Psoas muscle (tissue), 8 donors: ENCODE measurements at regions of chr2 and their contacts with region 1.

Region 1: DNA sequence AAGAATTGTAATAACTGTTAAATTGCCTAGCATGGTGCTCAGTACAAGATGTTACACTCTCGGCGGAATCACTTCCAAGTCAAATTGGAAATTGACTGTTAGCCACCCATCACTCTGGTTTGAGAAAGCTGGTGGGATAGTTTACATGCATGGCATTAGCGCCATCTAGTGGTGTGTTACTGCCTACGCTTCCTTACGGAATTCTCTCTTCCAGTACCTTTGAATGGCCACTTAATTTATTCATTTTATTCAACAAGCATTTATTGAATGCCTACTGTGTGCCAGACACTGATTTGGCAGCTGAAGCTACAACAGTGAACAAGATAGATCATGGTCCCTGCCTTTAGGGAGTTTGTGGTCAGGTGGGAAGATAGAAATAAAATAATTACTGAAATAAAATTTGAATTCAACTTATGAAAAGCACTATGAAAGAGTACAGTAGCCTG is 171.2 kb downstream of the TMEM247 start:
- DNase-seq: no peak
- ATAC-seq: peak; percentile 77 to 94 (median 84)
- H3K4me3 ChIP-seq: no peak overlapping the region
- H3K27ac ChIP-seq: no peak overlapping the region
- H3K4me1 ChIP-seq: peaks cover 4% of the 10 kb centered on the region
- H3K27me3 ChIP-seq: no peaks in the 10 kb centered on the region
- CTCF ChIP-seq: peak; percentile 96

Region 2: GRCh38 chr2:45993476-45993991 is 657.0 kb before region 1 on chr2:
- intact Hi-C with region 1: loop called in 1 of 2 experiments (anchors 5 kb)
- DNase-seq: peak in 1 of 2 donors; percentile 29
- ATAC-seq: peak; percentile 54 to 81 (median 62)
- H3K4me3 ChIP-seq: no peak overlapping the region
- H3K27ac ChIP-seq: no peak overlapping the region
- H3K4me1 ChIP-seq: peaks cover 4% of the 10 kb centered on the region
- H3K27me3 ChIP-seq: no peaks in the 10 kb centered on the region
- CTCF ChIP-seq: peak; percentile 78

Region 3: DNA sequence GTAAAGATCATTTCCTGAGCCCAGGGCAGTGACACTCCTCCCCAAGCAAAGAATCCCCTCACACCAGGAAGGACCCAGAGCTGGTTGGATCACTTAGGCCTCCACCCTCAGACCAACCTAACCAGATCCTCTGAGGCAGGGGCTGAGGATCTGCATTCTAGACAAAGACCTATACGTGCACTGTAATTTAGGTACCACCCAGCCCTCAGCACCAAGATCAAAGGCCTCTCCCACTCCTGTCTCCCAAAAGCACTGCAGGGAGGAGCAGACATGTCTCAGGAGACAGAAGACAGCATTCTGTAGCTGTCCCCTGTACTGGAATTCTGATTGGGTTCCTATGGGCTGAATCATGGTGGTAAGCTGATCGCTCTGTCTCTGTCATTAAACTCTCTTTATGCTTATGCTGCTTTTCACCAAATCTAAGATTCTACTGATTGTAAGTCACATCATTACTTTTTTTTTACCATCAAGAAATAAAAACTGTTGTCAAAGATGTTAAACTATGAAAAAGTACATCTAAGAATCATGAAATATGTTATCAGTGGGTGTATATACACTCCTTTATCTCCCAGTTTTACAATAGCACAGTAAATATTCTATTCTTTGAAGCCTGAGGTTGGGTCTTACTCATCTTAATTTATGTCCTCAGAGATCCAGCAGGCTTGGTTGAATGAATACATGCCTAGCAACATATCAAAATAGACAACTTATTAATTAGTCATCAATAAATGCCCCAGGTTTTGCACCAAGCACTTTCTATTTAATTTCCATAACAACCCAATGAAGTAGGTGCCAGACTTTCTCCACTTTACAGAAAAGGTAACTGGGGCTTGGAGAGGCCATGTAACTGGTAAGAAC is 236.7 kb after region 1 on chr2:
- intact Hi-C with region 1: loop called in 1 of 2 experiments (anchors 5 kb)
- DNase-seq: no peak
- ATAC-seq: no peak
- H3K4me3 ChIP-seq: no peak overlapping the region
- H3K27ac ChIP-seq: no peak overlapping the region
- H3K4me1 ChIP-seq: peaks cover 4% of the 10 kb centered on the region
- H3K27me3 ChIP-seq: no peaks in the 10 kb centered on the region
- CTCF ChIP-seq: no peak